ENCODE measurements at regions of chr10 and their contacts with region 1.

Region 1: DNA sequence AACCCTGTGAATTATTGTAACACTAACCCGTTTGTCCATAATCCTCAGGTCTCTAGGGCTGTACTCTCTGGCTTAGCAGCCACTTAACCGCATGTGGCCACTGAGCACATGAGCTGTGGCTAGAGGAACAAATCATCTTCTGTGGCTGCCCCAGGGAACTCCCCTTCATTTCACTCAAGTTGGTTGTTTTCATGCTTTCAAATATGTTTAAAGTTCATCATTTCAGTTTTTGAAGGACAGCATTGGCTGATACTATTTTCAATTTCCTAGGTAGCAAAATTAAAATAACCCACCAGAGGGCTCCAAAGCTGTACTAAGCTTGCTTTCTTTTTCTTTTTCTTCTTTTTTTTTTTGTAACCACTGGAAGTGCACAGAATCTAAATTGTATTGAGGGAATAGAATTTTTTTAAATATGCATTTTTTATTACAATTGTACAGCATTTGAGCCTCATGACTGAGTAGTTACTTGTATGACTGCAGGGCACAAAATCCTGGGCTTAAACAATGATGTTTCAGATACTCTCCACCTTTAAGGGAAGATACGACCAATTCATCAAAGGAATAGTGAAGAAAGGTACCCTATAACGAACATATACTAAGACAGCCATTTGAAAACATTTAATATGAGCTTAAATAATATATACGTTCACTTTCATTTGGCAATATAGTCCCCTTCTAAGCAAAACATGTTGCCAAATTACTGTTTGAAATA is 38.6 kb downstream of the MRC1 start:
- DNase-seq: no peak
- ATAC-seq: no peak
- H3K4me3 Mint-ChIP-seq: no peak overlapping the region
- H3K27ac Mint-ChIP-seq: no peak overlapping the region
- H3K4me1 Mint-ChIP-seq: no peaks in the 10 kb centered on the region
- H3K27me3 Mint-ChIP-seq: peaks cover 8% of the 10 kb centered on the region
- CTCF ChIP-seq: no peak

Region 2: GRCh38 chr10:17792991-17793390 is 54.8 kb before region 1 on chr10:
- CTCF ChIA-PET with region 1: no interaction called
- POLR2A ChIA-PET with region 1: no interaction called
- intact Hi-C with region 1: no loop called
- DNase-seq: no peak
- ATAC-seq: no peak
- H3K4me3 Mint-ChIP-seq: no peak overlapping the region
- H3K27ac Mint-ChIP-seq: no peak overlapping the region
- H3K4me1 Mint-ChIP-seq: no peaks in the 10 kb centered on the region
- H3K27me3 Mint-ChIP-seq: peaks cover 5% of the 10 kb centered on the region
- CTCF ChIP-seq: no peak

Region 3: GRCh38 chr10:17835688-17836087 is 12.1 kb before region 1 on chr10:
- CTCF ChIA-PET with region 1: no interaction called
- POLR2A ChIA-PET with region 1: no interaction called
- intact Hi-C with region 1: no loop called
- DNase-seq: no peak
- ATAC-seq: no peak
- H3K4me3 Mint-ChIP-seq: no peak overlapping the region
- H3K27ac Mint-ChIP-seq: no peak overlapping the region
- H3K4me1 Mint-ChIP-seq: peaks cover 15% of the 10 kb centered on the region
- H3K27me3 Mint-ChIP-seq: peaks cover 2% of the 10 kb centered on the region
- CTCF ChIP-seq: no peak

Region 4: GRCh38 chr10:18104223-18104872 is 256.6 kb after region 1 on chr10:
- CTCF ChIA-PET with region 1: interaction called, 3 read pairs
- POLR2A ChIA-PET with region 1: no interaction called
- intact Hi-C with region 1: loop called (anchors 1 kb)
- DNase-seq: no peak
- ATAC-seq: no peak
- H3K4me3 Mint-ChIP-seq: no peak overlapping the region
- H3K27ac Mint-ChIP-seq: no peak overlapping the region
- H3K4me1 Mint-ChIP-seq: no peaks in the 10 kb centered on the region
- H3K27me3 Mint-ChIP-seq: no peaks in the 10 kb centered on the region
- CTCF ChIP-seq: no peak

Region 5: DNA sequence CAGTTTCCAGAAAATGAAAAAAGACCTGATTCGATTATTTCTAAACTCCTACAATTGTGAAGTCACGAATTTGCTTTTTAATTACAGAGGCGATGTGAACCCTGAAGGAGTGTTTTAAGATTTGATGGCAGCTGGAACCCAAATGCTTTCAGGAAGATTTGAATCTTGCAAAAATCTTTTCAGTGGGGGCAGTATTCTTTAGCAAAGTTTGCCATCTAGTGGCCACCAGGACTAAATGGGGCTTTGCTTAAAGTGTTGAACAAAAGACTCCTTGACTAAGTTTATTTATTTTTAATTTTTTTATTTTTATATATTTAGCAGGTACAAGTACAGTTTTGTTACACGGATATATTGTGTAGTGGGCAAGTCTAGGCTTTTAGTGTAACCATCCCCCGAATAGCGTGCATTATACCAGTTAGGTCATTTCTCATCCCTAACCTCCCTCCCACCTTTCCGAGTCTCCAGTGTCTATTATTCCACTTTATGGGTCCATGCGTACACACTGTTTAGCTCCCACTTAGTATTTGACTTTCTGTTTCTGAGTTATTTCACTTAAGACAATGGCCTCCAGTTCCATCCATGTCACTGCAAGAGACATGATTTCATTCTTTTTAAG is 391.2 kb after region 1 on chr10:
- CTCF ChIA-PET with region 1: no interaction called
- POLR2A ChIA-PET with region 1: no interaction called
- intact Hi-C with region 1: loop called (anchors 1 kb)
- DNase-seq: no peak
- ATAC-seq: no peak
- H3K4me3 Mint-ChIP-seq: no peak overlapping the region
- H3K27ac Mint-ChIP-seq: no peak overlapping the region
- H3K4me1 Mint-ChIP-seq: no peaks in the 10 kb centered on the region
- H3K27me3 Mint-ChIP-seq: peaks cover 1% of the 10 kb centered on the region
- CTCF ChIP-seq: no peak

Region 6: GRCh38 chr10:19325581-19325980 is 1477.8 kb after region 1 on chr10:
- CTCF ChIA-PET with region 1: no interaction called
- POLR2A ChIA-PET with region 1: no interaction called
- intact Hi-C with region 1: no loop called
- DNase-seq: no peak
- ATAC-seq: no peak
- H3K4me3 Mint-ChIP-seq: no peak overlapping the region
- H3K27ac Mint-ChIP-seq: no peak overlapping the region
- H3K4me1 Mint-ChIP-seq: no peaks in the 10 kb centered on the region
- H3K27me3 Mint-ChIP-seq: no peaks in the 10 kb centered on the region
- CTCF ChIP-seq: no peak

Measured in activated B cell treated with CpG ODN at 0.5 μM for 24 hours (primary cell).